Activated CD8-positive, alpha-beta T cell treated with anti-CD3 and anti-CD28 coated beads for 36 hours (primary cell): ENCODE measurements at regions of chr1 and their contacts with region 1.

Region 1: GRCh38 chr1:161486806-161487741 is 18.2 kb upstream of the FCGR2A start:
- DNase-seq: peak; percentile 46
- ATAC-seq: peak; percentile 75
- H3K4me3 Mint-ChIP-seq: no peak overlapping the region
- H3K27ac Mint-ChIP-seq: no peak overlapping the region
- H3K4me1 Mint-ChIP-seq: peaks cover 13% of the 10 kb centered on the region
- H3K27me3 Mint-ChIP-seq: peaks cover 30% of the 10 kb centered on the region
- CTCF ChIP-seq: peak; percentile 85

Region 2: DNA sequence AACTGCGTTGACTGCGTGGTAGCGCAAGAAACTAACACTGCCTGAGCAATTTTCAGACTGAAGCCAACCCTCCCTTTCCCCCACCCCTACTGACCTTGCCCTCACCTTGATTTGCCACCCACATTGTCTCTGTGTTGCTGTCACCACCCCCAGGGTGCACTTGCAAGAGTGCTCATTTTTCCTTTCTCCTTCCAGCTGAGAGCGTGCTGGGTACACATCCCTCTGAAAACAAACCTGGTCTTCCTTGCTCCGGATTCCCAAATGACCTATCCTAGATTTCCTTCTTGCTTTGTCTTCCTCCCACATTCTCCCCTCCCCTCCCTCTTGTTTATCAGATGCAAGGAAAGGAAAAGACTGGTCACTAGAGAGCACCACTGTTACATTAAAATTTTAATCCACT is 201.6 kb before region 1 on chr1:
- CTCF ChIA-PET with region 1: no interaction called
- POLR2A ChIA-PET with region 1: no interaction called
- intact Hi-C with region 1: no loop called
- DNase-seq: no peak
- ATAC-seq: no peak
- H3K4me3 Mint-ChIP-seq: no peak overlapping the region
- H3K27ac Mint-ChIP-seq: no peak overlapping the region
- H3K4me1 Mint-ChIP-seq: no peaks in the 10 kb centered on the region
- H3K27me3 Mint-ChIP-seq: no peaks in the 10 kb centered on the region
- CTCF ChIP-seq: no peak

Region 3: DNA sequence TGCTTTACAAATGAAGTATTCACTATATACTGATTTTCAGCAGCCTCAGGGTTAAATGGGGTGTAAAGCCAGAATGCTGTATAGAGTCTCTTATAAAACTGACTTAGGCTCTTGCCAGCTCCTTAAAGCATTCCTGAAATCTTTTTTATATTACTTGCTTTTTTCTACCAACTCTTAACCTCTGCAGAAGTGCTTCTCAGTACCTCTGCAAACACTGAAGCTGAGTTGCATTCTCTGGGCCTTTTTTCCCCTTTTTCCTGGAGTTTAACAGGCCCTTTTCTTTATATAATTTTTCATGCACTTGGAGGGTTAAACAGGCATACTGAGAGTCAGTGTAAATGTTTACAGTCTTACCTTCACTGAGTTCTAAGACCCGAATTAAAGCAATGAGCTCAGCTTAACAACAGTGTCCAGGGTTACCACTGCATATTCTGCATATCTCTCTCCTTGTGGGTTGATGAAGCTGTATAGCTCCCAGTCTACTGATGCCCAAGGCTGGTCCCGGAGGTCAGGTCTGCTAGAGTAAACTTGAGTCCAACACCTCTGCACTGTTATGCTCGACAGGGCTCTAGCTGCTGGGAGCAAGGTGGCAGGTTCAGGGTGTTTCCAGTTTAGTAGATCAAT is 78.5 kb before region 1 on chr1:
- CTCF ChIA-PET with region 1: no interaction called
- POLR2A ChIA-PET with region 1: no interaction called
- intact Hi-C with region 1: no loop called
- DNase-seq: no peak
- ATAC-seq: no peak
- H3K4me3 Mint-ChIP-seq: no peak overlapping the region
- H3K27ac Mint-ChIP-seq: no peak overlapping the region
- H3K4me1 Mint-ChIP-seq: peaks cover 32% of the 10 kb centered on the region
- H3K27me3 Mint-ChIP-seq: peaks cover 3% of the 10 kb centered on the region
- CTCF ChIP-seq: no peak

Region 4: DNA sequence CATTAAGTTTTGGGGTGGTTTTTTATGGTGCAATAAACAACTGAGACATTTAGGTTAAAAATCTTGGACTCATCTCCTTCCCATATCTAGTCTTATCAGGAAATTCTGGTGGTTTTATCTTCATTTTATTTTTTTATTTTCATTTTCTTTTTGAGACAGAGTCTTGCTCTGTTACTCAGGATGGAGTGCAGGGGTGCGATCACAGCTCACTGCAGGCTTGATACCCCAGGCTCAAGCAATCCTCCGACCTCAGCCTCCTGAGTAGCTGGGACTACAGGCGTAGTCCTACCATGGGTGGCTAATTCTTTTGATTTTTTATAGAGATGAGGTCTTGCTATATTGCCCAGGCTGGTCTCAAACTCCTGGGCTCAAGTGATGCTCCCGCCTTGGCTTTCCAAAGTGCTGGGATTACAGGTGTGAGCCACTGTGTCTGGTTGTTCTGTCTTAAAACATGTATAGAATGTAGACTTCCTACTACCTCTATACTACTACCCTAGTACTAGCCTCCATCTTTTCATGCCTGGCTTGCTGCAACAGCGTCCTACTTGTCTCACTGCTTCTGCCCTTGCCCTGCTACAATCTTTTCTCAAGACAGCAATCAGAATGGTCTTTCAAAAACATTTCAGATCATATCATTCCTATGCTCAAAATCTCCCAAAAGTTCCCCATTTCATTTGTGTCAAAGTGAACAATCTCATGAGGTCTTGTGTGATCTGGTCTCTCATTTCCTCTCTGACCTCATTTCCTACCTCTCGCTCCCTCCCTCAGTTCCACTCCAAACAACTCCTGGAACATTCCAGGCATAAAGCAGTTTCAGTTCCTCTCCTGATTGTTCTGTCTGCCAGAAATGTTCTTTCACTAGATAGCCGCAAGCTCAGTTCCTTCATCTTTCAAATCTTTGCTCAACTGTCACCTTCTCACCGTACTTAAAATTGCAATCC is 12.3 kb after region 1 on chr1:
- CTCF ChIA-PET with region 1: interaction called, 11 read pairs
- POLR2A ChIA-PET with region 1: interaction called, 4 read pairs
- intact Hi-C with region 1: no loop called
- DNase-seq: no peak
- ATAC-seq: no peak
- H3K4me3 Mint-ChIP-seq: no peak overlapping the region
- H3K27ac Mint-ChIP-seq: no peak overlapping the region
- H3K4me1 Mint-ChIP-seq: peaks cover 7% of the 10 kb centered on the region
- H3K27me3 Mint-ChIP-seq: peaks cover 22% of the 10 kb centered on the region
- CTCF ChIP-seq: no peak